ENCODE measurements at regions of chr2 and their contacts with region 1.

Region 1: DNA sequence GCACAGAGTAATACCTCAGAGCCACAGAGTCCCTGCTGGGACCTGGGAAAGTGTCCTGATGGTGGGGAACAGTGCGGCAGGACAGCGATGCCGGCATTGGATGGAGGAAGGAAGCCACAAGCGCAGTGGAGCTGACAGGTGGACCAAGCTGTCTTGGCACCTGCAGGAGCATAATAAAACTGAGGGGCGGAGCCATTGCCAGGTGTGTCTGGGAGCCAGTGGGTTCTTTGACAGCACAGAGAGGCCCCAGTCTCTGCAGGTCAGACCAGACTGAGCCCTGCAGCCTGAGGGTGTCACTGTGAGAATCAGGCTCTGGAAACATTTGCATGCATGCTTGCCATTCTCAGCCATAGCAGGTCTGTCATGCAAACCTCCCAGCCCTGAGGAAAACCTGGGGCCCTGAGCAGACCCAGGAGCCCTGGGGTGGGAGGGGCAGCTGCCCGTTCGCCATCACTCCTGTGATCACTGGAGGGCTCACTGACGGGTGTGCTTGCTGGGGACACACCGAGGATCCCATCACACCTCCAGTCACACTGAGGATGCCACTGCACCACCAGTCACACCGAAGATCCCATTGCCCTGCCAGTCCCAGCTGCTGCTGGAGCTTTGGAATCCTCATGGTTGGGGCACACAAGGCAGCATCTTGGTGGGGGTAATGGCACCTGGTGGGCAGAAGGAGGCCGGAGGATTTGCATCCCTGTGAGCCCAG is 210.6 kb upstream of the HDAC4 start:
- DNase-seq: no peak

Region 2: DNA sequence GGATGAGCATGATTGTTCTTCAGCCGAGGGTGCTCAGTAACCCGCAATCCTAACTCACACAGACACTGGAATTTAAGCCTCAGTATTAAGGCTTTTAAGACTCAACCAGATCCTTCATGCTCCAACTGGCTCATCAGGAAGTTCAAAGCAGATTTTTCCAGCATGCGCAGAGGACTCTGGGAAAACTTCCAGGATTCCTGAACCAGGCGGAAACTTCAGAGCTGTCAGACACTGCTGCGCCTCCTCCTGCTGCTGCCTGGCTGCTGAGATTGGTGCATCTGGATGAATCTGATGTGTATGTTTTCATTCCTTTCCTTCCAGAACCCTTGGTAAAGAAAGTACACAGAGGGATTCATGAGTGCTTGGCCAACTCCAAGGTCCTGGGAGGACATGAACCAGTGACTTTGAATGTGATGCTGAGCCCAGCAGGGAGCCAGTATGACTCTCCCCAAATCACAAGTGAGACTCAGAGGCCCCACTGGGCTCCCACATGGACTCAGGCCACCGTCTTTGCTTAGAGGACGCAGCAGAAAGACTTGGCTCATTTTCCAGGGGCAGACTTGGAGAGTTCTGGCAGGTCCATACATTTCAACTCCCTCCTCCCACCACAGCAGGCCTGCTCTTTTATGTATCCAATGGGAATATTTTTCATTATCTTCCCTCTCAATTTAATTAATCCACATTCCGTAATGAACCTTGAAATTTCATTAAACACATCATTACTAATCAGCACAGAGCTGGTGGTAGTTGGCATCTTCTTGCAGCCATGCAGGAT is 67.0 kb before region 1 on chr2:
- in situ Hi-C with region 1: loop called (anchors 10 kb)
- DNase-seq: peak; percentile 3

Region 3: GRCh38 chr2:239555571-239555905 is 55.8 kb before region 1 on chr2:
- in situ Hi-C with region 1: no loop called
- DNase-seq: no peak

Measured in G401 (cell line).